ENCODE measurements at regions of chr3 and their contacts with region 1.

Region 1: GRCh38 chr3:149480325-149481017 is 6.0 kb downstream of the TM4SF4 start:
- DNase-seq: peak; percentile 91
- ATAC-seq: peak; percentile 99
- H3K4me3 Mint-ChIP-seq: no peak overlapping the region
- H3K27ac Mint-ChIP-seq: no peak overlapping the region
- H3K4me1 Mint-ChIP-seq: peaks cover 8% of the 10 kb centered on the region
- H3K27me3 Mint-ChIP-seq: no peaks in the 10 kb centered on the region
- CTCF ChIP-seq: peak; percentile 66

Region 2: GRCh38 chr3:149352556-149352955 is 127.9 kb before region 1 on chr3:
- CTCF ChIA-PET with region 1: interaction called, 12 read pairs
- POLR2A ChIA-PET with region 1: no interaction called
- DNase-seq: peak; percentile 75
- ATAC-seq: peak; percentile 99
- H3K4me3 Mint-ChIP-seq: no peak overlapping the region
- H3K27ac Mint-ChIP-seq: no peak overlapping the region
- H3K4me1 Mint-ChIP-seq: 0 out of 2 replicates have a peak, but pooled peaks cover 4% of the 10 kb centered on the region
- H3K27me3 Mint-ChIP-seq: no peaks in the 10 kb centered on the region
- CTCF ChIP-seq: peak; percentile 76

Region 3: DNA sequence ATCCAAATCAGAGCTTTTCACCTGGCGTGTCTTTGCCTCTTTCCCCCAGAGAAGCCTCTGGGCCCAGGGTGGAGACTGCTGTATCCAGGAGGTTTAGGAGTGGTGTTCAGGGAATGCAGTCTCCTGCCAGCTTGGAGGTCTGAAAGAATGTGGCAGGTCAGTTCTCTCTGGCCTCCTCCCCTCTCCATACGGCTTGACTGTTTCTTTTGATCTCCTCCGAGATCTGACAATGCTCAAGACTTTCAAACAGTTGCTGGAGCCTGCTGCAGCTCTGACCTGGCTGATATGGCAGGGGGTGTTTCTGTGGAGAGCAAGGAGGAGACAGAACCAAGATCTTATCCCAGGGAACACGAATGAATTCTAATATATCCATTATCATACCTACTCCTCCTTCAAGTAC is 30.7 kb before region 1 on chr3:
- CTCF ChIA-PET with region 1: no interaction called
- POLR2A ChIA-PET with region 1: no interaction called
- DNase-seq: no peak
- ATAC-seq: peak; percentile 88
- H3K4me3 Mint-ChIP-seq: no peak overlapping the region
- H3K27ac Mint-ChIP-seq: no peak overlapping the region
- H3K4me1 Mint-ChIP-seq: peaks cover 5% of the 10 kb centered on the region
- H3K27me3 Mint-ChIP-seq: no peaks in the 10 kb centered on the region; the same call in 1 of the 2 replicates
- CTCF ChIP-seq: no peak

Region 4: GRCh38 chr3:149460117-149460516 is 20.4 kb before region 1 on chr3:
- CTCF ChIA-PET with region 1: no interaction called
- POLR2A ChIA-PET with region 1: no interaction called
- DNase-seq: no peak
- ATAC-seq: no peak
- H3K4me3 Mint-ChIP-seq: no peak overlapping the region
- H3K27ac Mint-ChIP-seq: no peak overlapping the region
- H3K4me1 Mint-ChIP-seq: no peaks in the 10 kb centered on the region
- H3K27me3 Mint-ChIP-seq: no peaks in the 10 kb centered on the region
- CTCF ChIP-seq: no peak

Measured in WTC11 (cell line).